ENCODE measurements at regions of chr11 and their contacts with region 1.

Region 1: GRCh38 chr11:60913793-60914632 is at the start of gene TMEM109:
- DNase-seq: peak; percentile 60 to 90
- H3K4me3 ChIP-seq: peak within 1 kb of the TSS; percentile 63 to 82 (median 72)
- H3K27ac ChIP-seq: peak within 1 kb of the TSS; percentile 78
- H3K4me1 ChIP-seq: peaks cover 10 to 27% (median 18%) of the 10 kb centered on the region in 4 experiments
- H3K27me3 ChIP-seq: peaks cover 0 to 2% (median 0%) of the 10 kb centered on the region in 4 experiments; a peak in 1 of 7 replicates
- CTCF ChIP-seq: no peak
- EP300 ChIP-seq: no peak
- POLR2A ChIP-seq: peak in 1 of 2 experiments; percentile 44; a peak in 2 of 3 replicates
- RAD21 ChIP-seq: no peak
- total RNA-seq, gene TMEM109: 30.3 and 30.7 TPM in 2 replicates

Region 2: GRCh38 chr11:60899046-60899936 is 14.7 kb before region 1 on chr11:
- CTCF ChIA-PET with region 1: interaction called, 10 read pairs
- POLR2A ChIA-PET with region 1: interaction called, 28 read pairs
- DNase-seq: peak in 1 of 2 experiments; percentile 57
- H3K4me3 ChIP-seq: no peak overlapping the region
- H3K27ac ChIP-seq: 0 out of 2 replicates have a peak overlapping the region, but pooled peaks have one; percentile 42
- H3K4me1 ChIP-seq: peaks cover 0 to under 1% (median 0%) of the 10 kb centered on the region in 4 experiments; a peak in 1 of 7 replicates
- H3K27me3 ChIP-seq: no peaks in the 10 kb centered on the region
- CTCF ChIP-seq: peak; percentile 21 to 91 (median 74)
- EP300 ChIP-seq: no peak
- POLR2A ChIP-seq: no peak
- RAD21 ChIP-seq: peak; percentile 57 to 68

Region 3: DNA sequence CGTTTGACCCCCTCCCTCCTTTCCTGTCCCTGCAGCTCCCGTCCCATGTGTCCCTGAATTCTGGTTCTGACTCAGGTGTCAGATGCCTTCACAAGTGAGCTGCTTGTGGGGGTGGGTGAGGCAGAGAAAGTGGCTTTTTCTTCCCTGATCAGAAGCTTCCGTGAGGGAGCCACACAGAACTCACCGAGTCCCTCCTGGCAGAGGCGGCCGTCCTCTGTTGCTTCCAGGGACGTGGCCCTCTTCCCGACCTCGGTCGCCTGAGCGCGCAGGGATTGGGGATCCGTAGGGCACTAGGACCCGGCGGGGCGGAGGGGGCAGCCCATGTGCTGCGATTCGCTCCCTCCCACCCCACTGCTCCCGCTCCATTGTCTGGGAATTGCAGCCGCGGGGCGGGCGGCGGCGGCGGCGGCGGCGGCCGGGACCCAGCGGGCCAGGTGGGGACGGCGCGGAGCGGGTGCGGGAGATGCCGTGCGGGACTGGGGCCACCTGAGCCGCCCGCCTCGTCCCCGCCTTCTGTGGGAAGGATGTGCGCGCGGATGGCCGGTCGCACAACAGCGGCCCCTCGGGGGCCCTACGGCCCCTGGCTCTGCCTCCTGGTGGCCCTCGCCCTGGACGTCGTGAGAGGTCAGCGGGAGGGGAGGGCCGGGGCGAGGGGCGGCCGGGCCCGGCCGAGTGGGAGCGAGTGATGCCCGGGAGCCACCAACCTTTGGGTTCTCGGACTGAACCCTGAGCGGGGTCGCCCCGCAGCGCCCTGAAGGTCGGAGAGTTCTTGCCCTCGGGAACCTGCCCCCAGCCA is 10.3 kb after region 1 on chr11 and contains the start of gene TMEM132A:
- CTCF ChIA-PET with region 1: interaction called, 7 read pairs
- POLR2A ChIA-PET with region 1: interaction called, 26 read pairs
- DNase-seq: peak in 1 of 2 experiments; percentile 90
- H3K4me3 ChIP-seq: peak within 1 kb of the TSS; percentile 70 to 95 (median 77)
- H3K27ac ChIP-seq: no peak within 1 kb of the TSS; the same call in 1 of the 2 replicates
- H3K4me1 ChIP-seq: peaks cover 5 to 14% (median 5%) of the 10 kb centered on the region in 4 experiments; a peak in 6 of 7 replicates
- H3K27me3 ChIP-seq: peaks cover 0 to 3% (median 0%) of the 10 kb centered on the region in 4 experiments; a peak in 1 of 7 replicates
- CTCF ChIP-seq: no peak
- EP300 ChIP-seq: peak in 1 of 2 experiments; percentile 27; a peak in 1 of 3 replicates
- POLR2A ChIP-seq: peak in 1 of 2 experiments; percentile 25; a peak in 1 of 3 replicates
- RAD21 ChIP-seq: no peak; a peak in 1 of 4 replicates
- total RNA-seq, gene TMEM132A: 97.9 and 98.2 TPM in 2 replicates

Region 4: DNA sequence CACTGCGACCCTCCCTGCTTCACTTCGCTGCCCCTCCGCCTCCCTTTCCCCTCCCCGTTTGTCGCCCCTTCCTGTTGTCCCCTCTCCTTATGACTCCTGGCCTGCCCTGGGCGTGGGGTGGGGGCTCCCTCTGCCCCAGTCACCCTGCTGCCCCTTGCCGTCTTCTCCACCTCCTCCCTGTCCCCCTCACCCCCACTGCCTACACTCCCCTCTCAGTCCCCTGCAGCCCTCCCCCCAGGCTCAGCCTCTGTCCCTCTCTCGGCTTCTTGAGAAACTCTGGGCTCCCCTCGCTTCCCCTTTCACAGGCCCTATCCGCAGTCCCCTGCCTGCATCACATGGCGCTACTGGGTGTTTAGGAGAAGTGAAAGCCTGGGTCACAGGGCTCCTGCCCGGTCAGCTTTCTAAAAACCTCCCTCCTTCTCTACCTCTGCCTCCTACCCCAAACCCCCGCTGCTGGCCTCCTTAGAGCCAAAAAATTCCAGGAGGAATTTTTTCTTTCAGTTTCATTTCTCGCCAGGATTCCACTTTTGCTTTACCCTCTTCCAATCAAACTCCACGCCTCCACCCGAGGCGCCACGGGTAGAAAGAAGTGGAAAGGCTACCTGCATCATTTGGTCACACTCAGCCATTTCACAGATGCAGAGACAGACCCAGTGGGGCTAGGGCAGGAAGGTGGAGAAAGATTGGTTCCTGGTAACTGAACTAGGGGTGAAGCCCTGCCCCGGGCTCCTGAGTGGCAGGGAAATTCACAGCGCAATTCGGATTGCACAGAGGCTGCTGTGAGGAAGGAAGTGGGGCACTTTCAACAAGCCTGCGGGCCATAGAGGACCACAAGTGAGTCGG is 38.1 kb after region 1 on chr11 and contains the start of gene SLC15A3:
- CTCF ChIA-PET with region 1: interaction called, 9 read pairs
- POLR2A ChIA-PET with region 1: interaction called, 10 read pairs
- DNase-seq: peak in 1 of 2 experiments; percentile 72
- H3K4me3 ChIP-seq: peak within 1 kb of the TSS; percentile 28 to 66 (median 48)
- H3K27ac ChIP-seq: peak within 1 kb of the TSS; percentile 26; the same call in 1 of the 2 replicates
- H3K4me1 ChIP-seq: peaks cover 0 to 23% (median 14%) of the 10 kb centered on the region in 4 experiments; a peak in 6 of 7 replicates
- H3K27me3 ChIP-seq: peaks cover 0 to 15% (median 8%) of the 10 kb centered on the region in 4 experiments; a peak in 4 of 7 replicates
- CTCF ChIP-seq: no peak
- EP300 ChIP-seq: no peak
- POLR2A ChIP-seq: no peak
- RAD21 ChIP-seq: no peak
- total RNA-seq, gene SLC15A3: 25.8 and 33.7 TPM in 2 replicates